Cardiac septum (tissue), 1 donor: ENCODE measurements at regions of chr10 and their contacts with region 1.

Region 1: GRCh38 chr10:22475651-22476600 is 130.6 kb downstream of the SPAG6 start:
- DNase-seq: no peak

Region 2: DNA sequence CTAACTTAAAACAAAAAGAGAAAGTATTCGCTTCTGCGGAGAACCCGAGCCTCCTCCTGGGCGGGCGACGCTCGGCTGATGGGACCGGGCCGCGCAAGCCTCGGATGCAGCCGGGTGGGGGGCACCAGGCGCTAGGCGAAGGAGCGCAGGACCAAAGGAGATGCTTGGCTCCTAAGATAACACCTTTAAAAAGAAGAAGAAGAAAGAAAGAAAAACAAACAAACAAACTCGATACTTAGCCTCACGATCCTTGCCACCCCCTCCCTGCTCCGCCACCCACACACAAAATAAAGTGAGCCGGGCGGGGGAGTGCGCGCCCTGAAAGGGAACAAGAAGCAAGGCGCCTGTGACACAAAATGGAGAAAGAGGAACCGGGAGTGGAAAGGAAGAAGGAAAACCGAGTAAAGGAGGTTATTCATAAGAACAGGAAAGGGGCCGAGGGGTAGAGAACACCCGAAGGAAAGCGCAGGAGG is 224.1 kb before region 1 on chr10:
- intact Hi-C with region 1: no loop called
- DNase-seq: peak; percentile 88

Region 3: GRCh38 chr10:22894714-22895113 is 418.8 kb after region 1 on chr10:
- intact Hi-C with region 1: loop called (anchors 10 kb)
- DNase-seq: no peak